HEK293T (cell line): ENCODE measurements at regions of chr11 and their contacts with region 1.

Region 1: GRCh38 chr11:304915-305843 is 2.4 kb upstream of the IFITM2 start:
- DNase-seq: peak; percentile 58

Region 2: DNA sequence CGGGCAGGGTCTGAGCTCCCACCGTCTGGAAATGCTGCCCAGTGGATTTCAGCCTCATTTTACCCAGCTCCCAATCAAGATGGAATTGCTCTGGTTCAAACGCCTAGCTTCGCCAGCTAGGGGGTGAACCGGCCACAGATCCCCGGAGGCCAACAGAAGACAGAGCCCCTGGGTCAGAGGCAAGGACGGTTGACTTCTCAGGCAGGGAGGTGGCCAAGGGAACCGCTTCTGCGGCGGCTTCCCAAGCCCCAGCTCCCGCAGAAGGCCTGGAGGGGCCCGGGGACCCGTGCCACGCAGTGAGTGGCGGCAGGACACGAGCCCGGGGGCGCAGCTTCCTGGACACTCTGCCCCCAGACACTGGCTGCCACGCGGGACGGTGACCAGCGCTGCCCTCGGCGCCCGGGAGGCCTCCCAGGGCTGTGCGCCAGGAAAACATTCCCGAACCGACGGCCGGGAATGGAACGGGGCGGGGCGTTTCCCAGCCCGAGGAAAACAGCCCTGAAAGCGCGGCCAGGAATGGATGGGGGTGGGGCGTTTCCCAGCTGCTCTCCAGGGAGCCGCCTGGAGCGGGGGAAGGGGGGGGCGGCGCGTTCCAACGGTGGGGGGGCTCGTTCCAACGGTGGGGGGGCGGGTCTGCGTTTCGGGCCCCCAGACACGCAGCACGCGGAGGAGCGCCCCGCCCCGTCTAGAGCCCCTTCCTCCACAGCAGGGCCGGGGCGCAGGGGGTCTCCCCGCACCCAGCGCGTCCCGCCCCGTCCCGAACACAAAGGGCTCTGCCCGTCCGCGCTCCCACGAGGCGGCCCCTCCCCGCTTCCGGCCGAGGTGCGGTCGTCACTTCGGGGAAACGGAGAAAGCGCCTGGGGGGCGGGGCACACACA is 50.6 kb after region 1 on chr11:
- CTCF ChIA-PET with region 1: interaction called, 5 read pairs
- POLR2A ChIA-PET with region 1: interaction called, 10 read pairs
- DNase-seq: peak; percentile 77